HAP-1 (cell line): ENCODE measurements at regions of chr22 and their contacts with region 1.

Region 1: GRCh38 chr22:20156611-20157429 is 6.0 kb upstream of the CCDC188 start:
- DNase-seq: peak; percentile 38 to 93
- H3K4me3 ChIP-seq: no peak overlapping the region
- H3K4me1 ChIP-seq: no peaks in the 10 kb centered on the region
- H3K27me3 ChIP-seq: 0 out of 2 replicates have a peak, but pooled peaks cover 2% of the 10 kb centered on the region

Region 2: DNA sequence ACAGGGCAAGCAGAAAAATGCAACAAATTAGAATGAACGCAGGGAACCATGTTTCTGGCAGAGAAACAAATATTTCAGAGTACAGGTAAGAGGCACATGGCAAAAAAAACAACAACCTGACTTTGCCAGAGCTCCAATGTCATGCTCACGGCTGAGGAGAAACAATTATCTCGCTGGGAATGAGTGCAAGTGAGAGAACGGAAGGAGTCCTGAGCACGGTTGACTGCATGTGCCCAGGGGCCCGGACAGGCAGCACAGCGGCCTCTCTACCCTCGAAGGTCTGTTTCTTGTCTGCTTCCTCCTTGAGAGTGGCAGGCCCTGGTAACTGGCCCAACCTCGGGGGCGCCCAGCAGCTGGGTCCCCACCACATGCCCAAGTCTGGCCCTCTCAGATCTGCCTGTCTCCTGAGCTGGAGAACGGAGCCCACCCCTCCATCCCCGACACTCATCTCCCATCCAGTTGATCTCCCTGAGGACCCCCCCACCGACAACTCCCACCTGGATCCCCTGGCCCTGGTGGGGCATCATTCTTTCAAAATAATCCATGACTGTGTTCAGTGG is 135.9 kb after region 1 on chr22:
- in situ Hi-C with region 1: loop called (anchors 5 kb)
- DNase-seq: no peak
- H3K4me3 ChIP-seq: no peak overlapping the region
- H3K4me1 ChIP-seq: no peaks in the 10 kb centered on the region
- H3K27me3 ChIP-seq: no peaks in the 10 kb centered on the region

Region 3: DNA sequence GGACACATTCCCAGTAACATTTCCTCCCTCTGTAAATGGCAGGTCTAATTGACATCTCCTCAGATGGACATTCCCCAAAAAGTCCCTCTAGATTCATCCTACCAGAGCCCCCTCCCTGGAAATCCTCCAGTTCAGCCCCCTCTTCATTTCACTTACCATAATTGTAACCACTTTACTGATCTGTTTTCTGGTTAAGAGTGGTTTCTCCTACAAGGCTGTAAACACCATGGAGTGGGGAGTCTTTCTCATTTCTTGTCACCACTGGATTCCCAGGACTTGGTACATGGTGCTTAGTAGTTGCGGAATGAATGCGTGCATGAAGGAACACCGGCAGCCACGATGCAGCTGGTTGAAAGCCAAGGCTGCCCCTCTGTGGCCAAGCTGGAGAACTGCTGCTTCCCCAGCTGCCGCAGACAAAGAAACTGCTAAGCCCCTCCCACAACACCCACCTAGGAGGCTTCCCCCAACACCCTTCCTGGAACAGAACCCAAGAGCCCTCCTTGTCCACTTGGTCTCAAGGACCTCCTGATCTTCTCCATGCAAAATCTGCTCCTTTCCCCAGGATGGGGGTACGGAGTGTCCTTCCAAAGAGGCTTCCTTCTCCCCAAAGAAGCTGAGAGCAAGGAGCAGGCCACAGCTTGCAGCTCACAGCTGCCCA is 299.4 kb after region 1 on chr22:
- in situ Hi-C with region 1: loop called (anchors 10 kb)
- DNase-seq: peak; percentile 87 to 89
- H3K4me3 ChIP-seq: no peak overlapping the region
- H3K4me1 ChIP-seq: no peaks in the 10 kb centered on the region
- H3K27me3 ChIP-seq: no peaks in the 10 kb centered on the region

Region 4: GRCh38 chr22:20671409-20672081 is 514.7 kb after region 1 on chr22:
- in situ Hi-C with region 1: no loop called
- DNase-seq: no peak
- H3K4me3 ChIP-seq: no peak overlapping the region
- H3K4me1 ChIP-seq: no peaks in the 10 kb centered on the region; the same call in 1 of the 2 replicates
- H3K27me3 ChIP-seq: peaks cover 13% of the 10 kb centered on the region